Calu3 (cell line): ENCODE measurements at regions of chr1 and their contacts with region 1.

Region 1: GRCh38 chr1:153510984-153511410 is 24.8 kb downstream of the S100A6 start:
- DNase-seq: peak; percentile 97
- H3K4me3 Mint-ChIP-seq: no peak overlapping the region
- H3K27ac Mint-ChIP-seq: peak overlapping the region; percentile 82
- H3K4me1 Mint-ChIP-seq: peaks cover 82% of the 10 kb centered on the region
- H3K27me3 Mint-ChIP-seq: no peaks in the 10 kb centered on the region
- CTCF ChIP-seq: peak; percentile 97

Region 2: DNA sequence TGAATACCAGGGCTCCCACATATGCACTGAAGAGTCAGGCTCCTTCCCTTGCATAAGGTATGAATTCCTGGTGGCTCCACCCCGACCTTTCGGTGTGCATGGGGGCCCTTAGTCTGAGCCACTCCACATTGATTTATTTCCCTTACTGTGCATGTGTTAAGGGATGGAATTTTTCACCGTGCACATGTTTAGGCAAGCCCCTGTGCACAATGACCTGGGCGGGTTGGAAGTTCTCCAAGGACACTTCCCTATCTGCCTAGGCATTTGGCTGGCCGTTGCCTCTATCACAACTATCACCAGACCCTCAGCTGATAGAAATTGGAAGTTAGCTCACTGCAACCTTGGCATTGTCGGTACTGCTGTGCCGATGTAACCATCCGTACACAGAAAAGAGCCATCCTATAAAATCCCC is 15.1 kb after region 1 on chr1:
- CTCF ChIA-PET with region 1: interaction called, 11 read pairs
- intact Hi-C with region 1: no loop called
- DNase-seq: no peak
- H3K4me3 Mint-ChIP-seq: no peak overlapping the region
- H3K27ac Mint-ChIP-seq: no peak overlapping the region
- H3K4me1 Mint-ChIP-seq: peaks cover 18% of the 10 kb centered on the region
- H3K27me3 Mint-ChIP-seq: no peaks in the 10 kb centered on the region
- CTCF ChIP-seq: no peak

Region 3: DNA sequence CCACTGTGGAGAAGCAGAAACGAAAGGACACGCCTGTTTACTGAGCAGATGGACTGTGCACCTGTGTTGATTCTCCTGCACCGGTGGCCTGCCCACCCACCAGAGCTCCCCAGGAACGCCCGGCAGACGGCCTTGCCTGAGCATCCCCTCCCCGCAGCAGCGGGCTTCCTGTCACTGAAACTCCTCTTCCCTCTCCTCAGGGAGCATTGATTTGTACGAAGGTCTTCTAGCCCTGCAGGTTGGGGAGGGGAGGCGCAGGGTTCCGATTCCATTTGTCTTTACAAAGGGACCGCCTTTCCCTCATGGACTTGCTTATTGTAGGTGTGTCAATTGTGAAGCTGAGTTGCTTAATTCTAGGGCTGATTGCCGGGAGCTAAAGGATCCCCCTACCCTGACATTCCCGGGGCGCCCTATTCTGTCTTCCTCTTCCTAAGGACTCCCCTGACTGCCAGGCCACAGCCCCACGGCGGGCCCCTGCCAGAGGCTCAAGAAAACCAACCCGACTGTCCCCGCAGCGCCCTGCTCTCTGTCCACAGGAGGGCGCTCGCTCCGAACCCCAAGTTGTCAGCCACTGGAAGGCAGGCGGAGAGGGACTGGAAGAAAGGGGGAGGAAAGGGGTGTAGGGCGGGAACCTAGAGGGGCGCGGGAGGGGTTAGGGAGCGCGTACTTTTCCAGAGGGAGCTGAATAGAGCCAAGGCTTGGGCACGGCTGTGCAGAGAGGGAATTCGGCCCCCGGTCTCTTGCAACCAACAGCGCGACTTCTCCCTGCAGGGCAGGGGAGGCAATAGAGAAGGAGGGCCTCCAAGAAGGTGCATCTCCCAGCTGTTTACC is 22.0 kb after region 1 on chr1:
- CTCF ChIA-PET with region 1: interaction called, 34 read pairs
- intact Hi-C with region 1: loop called (anchors 2 kb)
- DNase-seq: peak; percentile 93
- H3K4me3 Mint-ChIP-seq: peak overlapping the region; percentile 93
- H3K27ac Mint-ChIP-seq: peak overlapping the region; percentile 77
- H3K4me1 Mint-ChIP-seq: peaks cover 47% of the 10 kb centered on the region
- H3K27me3 Mint-ChIP-seq: no peaks in the 10 kb centered on the region
- CTCF ChIP-seq: peak; percentile 88

Region 4: GRCh38 chr1:153566440-153567379 is 55.7 kb after region 1 on chr1:
- CTCF ChIA-PET with region 1: interaction called, 28 read pairs
- intact Hi-C with region 1: loop called (anchors 1 kb)
- DNase-seq: peak; percentile 100
- H3K4me3 Mint-ChIP-seq: peak overlapping the region; percentile 36
- H3K27ac Mint-ChIP-seq: peak overlapping the region; percentile 96
- H3K4me1 Mint-ChIP-seq: peaks cover 63% of the 10 kb centered on the region
- H3K27me3 Mint-ChIP-seq: no peaks in the 10 kb centered on the region
- CTCF ChIP-seq: no peak

Region 5: DNA sequence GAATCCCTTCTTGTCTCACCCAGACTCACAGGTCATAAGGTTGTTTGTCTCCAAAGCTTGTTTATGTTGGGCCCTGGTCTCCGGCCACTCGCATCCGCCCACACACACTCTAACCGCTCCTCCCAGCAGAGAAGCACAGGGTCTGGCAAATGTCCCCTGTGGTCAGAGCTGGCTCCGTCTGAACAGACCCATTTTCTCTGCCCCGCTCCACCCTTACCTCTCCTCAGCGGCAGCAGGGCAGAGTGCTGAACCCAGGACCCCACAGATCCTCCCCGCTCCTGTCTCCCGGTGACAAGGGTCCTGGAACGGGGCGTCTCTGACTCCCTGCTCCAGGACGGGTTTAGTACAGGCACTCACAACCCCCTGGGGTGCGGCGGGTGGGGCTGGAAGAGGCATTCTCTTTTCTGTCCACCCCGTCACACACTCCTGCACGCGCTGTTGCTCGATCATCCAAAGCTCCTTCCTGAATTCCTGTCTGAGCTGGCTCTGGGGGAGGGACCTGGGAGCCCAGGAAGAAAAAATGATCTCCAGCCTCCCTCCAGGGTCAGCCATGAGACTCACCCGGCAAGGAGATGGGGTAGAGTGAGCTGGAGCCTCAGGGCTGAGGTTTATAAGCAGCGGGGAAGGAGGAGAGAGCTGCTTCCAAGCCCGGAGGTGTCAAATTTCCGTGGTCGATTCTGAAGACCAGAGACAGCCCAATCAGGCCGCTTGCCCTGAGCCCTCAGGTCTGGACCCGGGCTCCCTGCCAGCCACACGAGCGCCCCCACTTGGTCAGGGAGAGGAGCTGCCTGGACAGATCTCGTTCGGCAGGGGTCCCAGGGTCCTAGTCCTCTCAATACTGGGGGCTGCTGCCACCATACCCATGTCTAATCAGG is 116.2 kb after region 1 on chr1 and contains the start of gene S100A13:
- CTCF ChIA-PET with region 1: interaction called, 10 read pairs
- intact Hi-C with region 1: no loop called
- DNase-seq: peak; percentile 93
- H3K4me3 Mint-ChIP-seq: peak within 1 kb of the TSS; percentile 82
- H3K27ac Mint-ChIP-seq: peak within 1 kb of the TSS; percentile 81
- H3K4me1 Mint-ChIP-seq: peaks cover 39% of the 10 kb centered on the region
- H3K27me3 Mint-ChIP-seq: no peaks in the 10 kb centered on the region
- CTCF ChIP-seq: peak; percentile 90
- total RNA-seq, gene S100A13: 104 and 117 TPM in 2 replicates

Region 6: DNA sequence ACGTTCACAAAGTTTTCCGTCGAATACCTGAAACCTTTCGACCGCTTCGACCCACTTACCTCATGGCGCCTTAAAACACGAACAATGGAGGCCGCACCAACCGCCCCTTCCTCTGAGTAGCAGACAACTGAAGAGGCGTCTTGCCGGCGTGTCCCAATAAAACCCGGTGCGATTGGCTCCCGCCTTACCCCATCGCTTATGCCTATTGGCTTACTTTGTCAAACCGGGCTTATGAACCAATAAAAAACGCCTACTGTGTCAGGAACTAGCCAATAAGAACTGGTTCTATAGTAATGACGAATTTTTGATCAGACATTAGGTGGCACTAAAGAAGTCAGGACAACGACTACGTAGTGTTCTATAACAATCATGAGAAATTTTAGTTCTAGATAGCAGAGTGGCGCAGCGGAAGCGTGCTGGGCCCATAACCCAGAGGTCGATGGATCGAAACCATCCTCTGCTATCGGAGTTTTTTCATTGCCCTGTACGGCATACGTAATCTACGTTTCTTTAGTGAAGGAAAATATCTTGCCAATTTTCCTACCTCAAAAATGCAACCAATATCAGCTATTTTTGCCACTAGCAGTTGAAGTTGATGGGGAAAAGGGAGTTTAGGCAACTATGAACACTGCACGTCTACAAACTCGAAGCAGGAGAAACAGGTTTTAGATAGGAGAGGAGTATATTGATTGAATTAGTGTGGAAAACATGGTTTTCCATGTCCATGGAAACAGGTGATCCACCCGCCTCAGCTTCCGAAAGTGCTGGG is 160.0 kb after region 1 on chr1 and contains the start of gene ILF2:
- CTCF ChIA-PET with region 1: no interaction called
- intact Hi-C with region 1: loop called (anchors 5 kb)
- DNase-seq: peak; percentile 98
- H3K4me3 Mint-ChIP-seq: no peak within 1 kb of the TSS
- H3K27ac Mint-ChIP-seq: no peak within 1 kb of the TSS
- H3K4me1 Mint-ChIP-seq: peaks cover 11% of the 10 kb centered on the region
- H3K27me3 Mint-ChIP-seq: no peaks in the 10 kb centered on the region
- CTCF ChIP-seq: peak; percentile 24
- total RNA-seq, gene ILF2: 253 and 292 TPM in 2 replicates

Region 7: DNA sequence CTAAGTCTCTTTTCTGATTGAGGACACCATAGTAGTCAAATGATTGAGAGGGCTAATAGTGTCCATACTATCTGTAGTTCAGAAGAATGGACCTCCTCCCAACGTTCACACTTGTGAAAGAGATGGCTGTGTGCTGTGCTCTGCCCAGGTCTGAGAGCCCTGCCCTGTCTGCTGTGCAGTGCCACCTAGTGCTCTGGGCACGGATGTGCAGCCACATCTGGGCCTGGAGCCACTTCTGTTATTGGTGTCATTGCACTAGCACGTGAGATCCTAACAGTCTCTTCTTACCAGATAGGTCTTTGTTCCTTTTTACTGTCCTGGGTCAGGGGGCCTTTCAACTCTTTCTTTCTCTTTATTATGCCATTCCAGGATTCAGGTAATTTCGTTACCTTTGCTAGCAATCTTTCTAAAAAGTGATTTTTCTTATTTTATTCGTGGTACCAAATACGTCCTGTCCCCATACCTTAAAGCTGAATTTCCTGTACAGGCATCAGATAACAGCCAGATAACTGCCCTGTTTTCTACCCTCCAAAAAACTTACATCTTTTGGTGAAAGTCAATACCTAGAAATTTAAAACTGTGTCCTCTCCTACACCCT is 238.5 kb after region 1 on chr1:
- CTCF ChIA-PET with region 1: no interaction called
- intact Hi-C with region 1: loop called (anchors 2 kb)
- DNase-seq: peak; percentile 85
- H3K4me3 Mint-ChIP-seq: no peak overlapping the region
- H3K27ac Mint-ChIP-seq: no peak overlapping the region
- H3K4me1 Mint-ChIP-seq: no peaks in the 10 kb centered on the region
- H3K27me3 Mint-ChIP-seq: no peaks in the 10 kb centered on the region
- CTCF ChIP-seq: peak; percentile 88